ENCODE measurements at regions of chr6 and their contacts with region 1.

Region 1: GRCh38 chr6:154276810-154277628 is 79.6 kb downstream of the IPCEF1 start:
- DNase-seq: no peak
- ATAC-seq: peak; percentile 79
- H3K4me3 ChIP-seq: peak overlapping the region; percentile 0
- H3K27ac ChIP-seq: no peak overlapping the region
- H3K4me1 ChIP-seq: no peaks in the 10 kb centered on the region
- H3K27me3 ChIP-seq: no peaks in the 10 kb centered on the region
- CTCF ChIP-seq: peak; percentile 71

Region 2: GRCh38 chr6:154156135-154156896 is 120.7 kb before region 1 on chr6:
- intact Hi-C with region 1: loop called (anchors 5 kb)
- DNase-seq: peak; percentile 70
- ATAC-seq: peak; percentile 96
- H3K4me3 ChIP-seq: no peak overlapping the region
- H3K27ac ChIP-seq: peak overlapping the region; percentile 17
- H3K4me1 ChIP-seq: peaks cover 23% of the 10 kb centered on the region
- H3K27me3 ChIP-seq: no peaks in the 10 kb centered on the region
- CTCF ChIP-seq: peak; percentile 65

Region 3: DNA sequence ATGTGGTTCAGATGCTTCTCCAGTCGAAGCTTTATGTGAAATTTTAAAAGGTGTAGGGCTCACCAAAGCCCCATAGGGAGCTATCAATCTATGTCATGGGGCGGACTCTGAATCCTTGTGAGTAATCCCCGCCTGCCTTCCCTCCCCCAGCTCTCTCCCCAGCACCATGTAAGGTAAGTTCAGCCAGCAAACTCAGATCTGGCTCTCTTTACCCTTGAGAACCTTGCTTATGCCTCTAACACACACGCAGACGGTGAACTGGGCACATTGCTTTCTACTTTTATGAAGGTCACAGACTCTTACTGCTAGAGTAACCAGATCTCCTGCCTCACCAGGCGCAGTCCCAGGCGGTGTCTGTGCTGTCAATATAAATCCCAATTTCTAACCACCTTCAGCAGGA is 316.1 kb after region 1 on chr6:
- intact Hi-C with region 1: no loop called
- DNase-seq: no peak
- ATAC-seq: no peak
- H3K4me3 ChIP-seq: no peak overlapping the region
- H3K27ac ChIP-seq: no peak overlapping the region
- H3K4me1 ChIP-seq: no peaks in the 10 kb centered on the region
- H3K27me3 ChIP-seq: no peaks in the 10 kb centered on the region
- CTCF ChIP-seq: no peak

Measured in upper lobe of right lung (tissue), 1 donor.